A673 (cell line): ENCODE measurements at regions of chr13 and their contacts with region 1.

Region 1: DNA sequence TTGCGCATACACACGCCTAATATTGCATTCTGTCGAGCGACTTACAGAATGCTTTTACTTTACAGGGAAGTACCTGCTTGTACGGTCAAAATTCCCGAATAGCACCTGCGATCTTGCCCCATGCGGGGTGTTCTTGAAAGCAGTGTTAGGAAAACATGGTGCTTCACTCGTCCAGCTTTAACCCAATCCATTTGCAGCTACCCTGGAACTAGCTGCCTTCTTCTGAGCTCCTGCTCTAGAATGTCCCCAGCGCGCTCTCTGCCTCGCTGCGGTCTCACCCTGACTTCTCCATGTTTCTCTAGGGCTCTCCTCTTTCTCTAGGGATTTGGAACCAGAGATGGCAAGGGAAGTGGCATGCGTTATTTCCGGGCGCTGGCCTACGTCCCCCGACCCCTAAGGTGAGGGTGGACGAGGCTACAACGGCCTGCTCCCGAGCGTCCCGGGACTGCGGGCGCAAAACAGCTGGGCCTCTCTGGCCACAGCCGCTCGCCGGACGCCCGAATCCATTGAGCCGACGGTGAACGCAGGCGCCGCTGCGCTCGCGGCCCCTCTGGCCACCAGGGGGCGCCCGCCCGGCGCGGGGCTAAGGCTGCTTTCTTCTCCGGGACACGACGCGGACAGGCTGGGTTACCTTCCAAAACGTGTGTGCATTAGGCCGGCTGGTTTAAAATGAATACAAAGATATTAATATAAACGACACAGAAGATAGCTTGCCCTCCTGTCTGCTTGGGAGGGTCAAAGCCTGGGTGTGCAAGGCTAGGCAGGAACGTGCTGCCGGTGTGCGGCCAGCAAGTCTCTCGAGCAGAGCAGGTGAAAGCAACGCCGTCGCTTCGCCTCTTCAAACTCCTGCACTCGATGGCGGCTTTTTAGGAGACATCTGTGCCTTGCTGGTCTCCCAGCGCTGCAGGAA is 1.8 kb upstream of the SPRY2 start:
- DNase-seq: peak; percentile 81
- H3K4me3 ChIP-seq: peak overlapping the region; percentile 90
- H3K27ac ChIP-seq: peak overlapping the region; percentile 63
- H3K4me1 ChIP-seq: peaks cover 11% of the 10 kb centered on the region
- H3K27me3 ChIP-seq: no peaks in the 10 kb centered on the region
- CTCF ChIP-seq: peak; percentile 98

Region 2: GRCh38 chr13:79692846-79693245 is 649.9 kb before region 1 on chr13:
- CTCF ChIA-PET with region 1: interaction called, 10 read pairs
- POLR2A ChIA-PET with region 1: no interaction called
- intact Hi-C with region 1: no loop called
- DNase-seq: no peak
- H3K4me3 ChIP-seq: no peak overlapping the region
- H3K27ac ChIP-seq: no peak overlapping the region
- H3K4me1 ChIP-seq: no peaks in the 10 kb centered on the region
- H3K27me3 ChIP-seq: no peaks in the 10 kb centered on the region
- CTCF ChIP-seq: no peak

Region 3: DNA sequence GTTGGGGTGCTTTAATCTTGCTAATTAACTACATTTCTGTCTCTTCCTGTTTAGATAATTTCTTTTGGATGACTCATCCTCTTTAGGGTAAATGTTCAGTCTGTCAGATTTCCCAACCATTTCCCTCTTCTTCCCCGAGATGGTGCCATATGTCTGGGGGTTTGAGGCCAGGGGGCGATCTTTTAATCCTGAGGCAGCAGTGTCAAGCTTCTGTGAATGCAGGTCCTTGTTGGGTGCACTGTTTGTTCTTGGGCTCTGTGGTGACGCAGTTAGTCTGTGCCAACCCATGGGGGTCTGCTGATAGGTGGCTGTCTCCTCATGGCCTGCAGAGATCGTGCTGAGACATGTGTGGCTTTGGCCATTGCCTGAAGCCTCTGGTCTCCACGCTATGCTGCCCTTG is 441.4 kb before region 1 on chr13:
- CTCF ChIA-PET with region 1: interaction called, 5 read pairs
- POLR2A ChIA-PET with region 1: no interaction called
- intact Hi-C with region 1: loop called (anchors 5 kb)
- DNase-seq: peak; percentile 93
- H3K4me3 ChIP-seq: no peak overlapping the region
- H3K27ac ChIP-seq: no peak overlapping the region
- H3K4me1 ChIP-seq: peaks cover 33% of the 10 kb centered on the region
- H3K27me3 ChIP-seq: no peaks in the 10 kb centered on the region
- CTCF ChIP-seq: peak; percentile 58

Region 4: GRCh38 chr13:80168089-80168850 is 174.5 kb before region 1 on chr13:
- CTCF ChIA-PET with region 1: no interaction called
- POLR2A ChIA-PET with region 1: no interaction called
- intact Hi-C with region 1: loop called (anchors 10 kb)
- DNase-seq: peak; percentile 49
- H3K4me3 ChIP-seq: no peak overlapping the region
- H3K27ac ChIP-seq: no peak overlapping the region
- H3K4me1 ChIP-seq: peaks cover 9% of the 10 kb centered on the region
- H3K27me3 ChIP-seq: no peaks in the 10 kb centered on the region
- CTCF ChIP-seq: no peak

Region 5: DNA sequence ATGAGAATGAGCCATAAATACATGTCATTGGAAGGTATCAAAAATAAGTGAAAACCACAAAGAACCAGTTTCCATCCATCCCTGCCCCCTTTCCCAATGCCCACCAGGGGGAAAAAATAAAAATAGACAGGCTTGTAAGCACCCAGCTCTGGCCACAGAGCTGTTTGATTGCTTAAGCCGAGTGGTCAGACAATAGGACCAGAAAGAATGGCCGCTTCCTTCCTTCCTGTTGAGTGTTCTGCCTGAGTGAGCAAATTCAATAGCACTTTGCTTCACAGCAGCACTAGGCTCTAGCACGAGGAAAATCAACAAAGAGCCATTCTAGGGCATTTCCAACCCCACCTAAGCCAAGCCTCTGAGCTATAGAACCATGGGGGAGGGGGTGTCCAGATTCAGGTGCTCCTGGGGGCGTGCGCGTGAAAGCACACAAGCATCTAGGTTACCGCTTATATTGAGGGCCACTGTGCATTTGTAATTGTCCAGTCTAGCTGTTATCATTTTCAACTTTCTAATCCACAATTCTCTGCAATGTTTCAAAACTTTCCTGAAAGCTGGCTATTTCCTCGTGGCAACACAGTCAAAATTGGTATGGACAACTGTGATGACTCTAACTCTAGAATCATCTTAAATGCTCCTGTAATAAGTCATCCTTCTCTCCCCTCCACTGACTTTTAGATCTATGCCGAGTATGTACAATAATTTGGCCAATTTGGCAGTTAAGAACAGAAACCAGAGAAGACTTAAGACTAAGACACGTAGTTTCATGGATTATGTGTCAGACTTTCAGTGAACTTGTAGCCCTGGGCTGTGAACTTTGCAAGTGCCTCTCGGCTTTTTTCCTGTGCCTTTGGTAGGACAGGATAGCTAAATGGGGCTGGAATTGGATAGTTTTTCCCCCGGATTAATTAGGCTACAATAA is 66.1 kb before region 1 on chr13:
- CTCF ChIA-PET with region 1: interaction called, 10 read pairs
- POLR2A ChIA-PET with region 1: interaction called, 3 read pairs
- intact Hi-C with region 1: no loop called
- DNase-seq: peak; percentile 95
- H3K4me3 ChIP-seq: peak overlapping the region; percentile 3
- H3K27ac ChIP-seq: peak overlapping the region; percentile 62
- H3K4me1 ChIP-seq: peaks cover 28% of the 10 kb centered on the region
- H3K27me3 ChIP-seq: no peaks in the 10 kb centered on the region
- CTCF ChIP-seq: peak; percentile 40; the same call in 1 of the 2 replicates

Region 6: GRCh38 chr13:80669112-80669511 is 326.4 kb after region 1 on chr13:
- CTCF ChIA-PET with region 1: no interaction called
- POLR2A ChIA-PET with region 1: no interaction called
- intact Hi-C with region 1: no loop called
- DNase-seq: no peak
- H3K4me3 ChIP-seq: no peak overlapping the region
- H3K27ac ChIP-seq: no peak overlapping the region
- H3K4me1 ChIP-seq: no peaks in the 10 kb centered on the region
- H3K27me3 ChIP-seq: no peaks in the 10 kb centered on the region
- CTCF ChIP-seq: no peak

Region 7: GRCh38 chr13:80923907-80924306 is 581.2 kb after region 1 on chr13:
- CTCF ChIA-PET with region 1: no interaction called
- POLR2A ChIA-PET with region 1: no interaction called
- intact Hi-C with region 1: loop called (anchors 10 kb)
- DNase-seq: peak; percentile 15
- H3K4me3 ChIP-seq: no peak overlapping the region
- H3K27ac ChIP-seq: no peak overlapping the region
- H3K4me1 ChIP-seq: no peaks in the 10 kb centered on the region
- H3K27me3 ChIP-seq: no peaks in the 10 kb centered on the region
- CTCF ChIP-seq: peak; percentile 50; the same call in 1 of the 2 replicates